ENCODE measurements at regions of chr11 and their contacts with region 1.

Region 1: DNA sequence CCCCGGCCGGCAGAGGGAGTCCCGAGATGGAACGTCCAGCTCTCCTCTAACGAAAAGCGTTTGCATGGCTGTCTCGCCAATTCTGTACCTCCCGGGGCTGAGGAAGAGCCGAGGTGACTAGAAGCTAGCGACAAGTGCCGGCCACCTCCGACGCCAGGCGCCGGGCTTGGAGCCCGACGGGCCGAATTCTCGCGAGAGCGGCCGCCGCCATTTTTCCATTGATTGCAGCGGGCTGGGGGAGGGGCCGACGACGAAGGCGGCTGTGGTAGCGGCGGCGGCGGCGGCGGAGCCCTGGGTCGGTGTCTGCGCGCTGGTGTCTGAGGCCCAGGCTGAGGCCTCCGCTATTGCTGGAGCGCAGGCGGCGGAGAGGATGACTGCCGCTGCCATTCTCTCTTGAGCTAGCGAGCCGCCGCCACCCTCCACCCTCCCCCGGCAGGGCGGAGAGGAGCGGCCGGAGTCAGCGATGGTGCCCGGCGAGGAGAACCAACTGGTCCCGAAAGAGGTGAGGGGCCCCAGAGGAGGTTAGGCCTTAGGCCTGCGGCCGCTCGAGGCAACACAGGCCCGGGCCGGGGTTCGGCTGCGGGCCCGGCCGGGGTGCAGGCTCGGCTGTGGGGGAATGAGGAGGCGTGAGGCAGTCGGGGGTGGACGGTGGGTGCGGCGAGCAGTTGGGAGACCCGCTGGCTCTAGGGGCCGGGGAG is at the start of gene USP47:
- DNase-seq: no peak
- ATAC-seq: peak; percentile 78
- H3K4me3 ChIP-seq: peak within 1 kb of the TSS; percentile 77
- H3K27ac ChIP-seq: peak within 1 kb of the TSS; percentile 96
- H3K4me1 ChIP-seq: peaks cover 2% of the 10 kb centered on the region; the same call in 1 of the 2 replicates
- H3K27me3 ChIP-seq: no peaks in the 10 kb centered on the region
- CTCF ChIP-seq: peak in 2 of 3 experiments; percentile 27 to 50; a peak in 3 of 6 replicates
- EP300 ChIP-seq: no peak
- POLR2A ChIP-seq: peak; percentile 94
- RAD21 ChIP-seq: peak; percentile 26; the same call in 1 of the 2 replicates
- polyA plus RNA-seq, gene USP47: 13.9 to 14.8 TPM

Region 2: GRCh38 chr11:10808553-10809372 is 1033.1 kb before region 1 on chr11 and contains the start of gene EIF4G2:
- CTCF ChIA-PET with region 1: interaction called, 3 read pairs
- POLR2A ChIA-PET with region 1: interaction called, 6 read pairs
- RAD21 ChIA-PET with region 1: interaction called, 10 read pairs
- SMC1A ChIA-PET with region 1: no interaction called
- in situ Hi-C with region 1: no loop called
- intact Hi-C with region 1: loop called (anchors 5 kb)
- DNase-seq: peak; percentile 95
- ATAC-seq: peak; percentile 96
- H3K4me3 ChIP-seq: peak within 1 kb of the TSS; percentile 88
- H3K27ac ChIP-seq: peak within 1 kb of the TSS; percentile 98
- H3K4me1 ChIP-seq: peaks cover 10% of the 10 kb centered on the region; the same call in 1 of the 2 replicates
- H3K27me3 ChIP-seq: no peaks in the 10 kb centered on the region
- CTCF ChIP-seq: no peak
- EP300 ChIP-seq: no peak
- POLR2A ChIP-seq: peak; percentile 98
- RAD21 ChIP-seq: no peak
- polyA plus RNA-seq, gene EIF4G2: 210 to 317 TPM

Region 3: DNA sequence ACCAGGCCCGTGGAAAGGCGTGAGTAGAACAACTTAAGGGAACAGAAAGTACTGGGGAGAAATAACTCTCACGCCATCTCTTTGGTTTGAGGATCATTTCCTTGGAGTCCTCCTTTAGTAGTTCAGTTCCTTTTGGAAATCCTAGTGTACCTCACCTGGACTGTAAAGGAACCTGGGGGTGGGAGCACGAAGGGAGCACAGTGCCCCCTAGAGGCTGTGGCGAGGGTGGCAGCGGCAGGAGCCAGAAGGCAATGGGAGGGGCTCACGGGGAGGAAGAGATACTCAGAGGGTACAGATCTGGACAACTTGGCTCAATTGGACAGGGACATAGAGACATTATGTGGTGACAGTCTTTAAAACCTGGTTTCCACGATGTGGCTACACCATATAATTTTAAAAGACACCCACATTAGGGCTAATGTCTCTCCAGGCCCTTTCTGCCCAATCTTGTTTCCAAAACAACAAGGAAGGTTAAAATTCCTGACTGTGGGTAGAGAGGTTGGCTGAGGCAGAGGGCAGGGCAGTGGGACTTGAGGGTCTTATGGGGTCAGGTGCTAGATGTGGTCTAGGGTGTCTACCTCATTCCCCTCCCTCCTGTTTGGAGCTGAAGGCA is 575.8 kb before region 1 on chr11:
- CTCF ChIA-PET with region 1: no interaction called
- POLR2A ChIA-PET with region 1: interaction called, 11 read pairs
- RAD21 ChIA-PET with region 1: no interaction called
- SMC1A ChIA-PET with region 1: no interaction called
- in situ Hi-C with region 1: no loop called
- intact Hi-C with region 1: no loop called
- DNase-seq: no peak
- ATAC-seq: peak; percentile 91
- H3K4me3 ChIP-seq: no peak overlapping the region
- H3K27ac ChIP-seq: no peak overlapping the region
- H3K4me1 ChIP-seq: peaks cover 17% of the 10 kb centered on the region
- H3K27me3 ChIP-seq: no peaks in the 10 kb centered on the region; a peak in 1 of 4 replicates
- CTCF ChIP-seq: peak; percentile 83 to 97 (median 92)
- EP300 ChIP-seq: no peak
- POLR2A ChIP-seq: no peak
- RAD21 ChIP-seq: peak; percentile 78

Region 4: DNA sequence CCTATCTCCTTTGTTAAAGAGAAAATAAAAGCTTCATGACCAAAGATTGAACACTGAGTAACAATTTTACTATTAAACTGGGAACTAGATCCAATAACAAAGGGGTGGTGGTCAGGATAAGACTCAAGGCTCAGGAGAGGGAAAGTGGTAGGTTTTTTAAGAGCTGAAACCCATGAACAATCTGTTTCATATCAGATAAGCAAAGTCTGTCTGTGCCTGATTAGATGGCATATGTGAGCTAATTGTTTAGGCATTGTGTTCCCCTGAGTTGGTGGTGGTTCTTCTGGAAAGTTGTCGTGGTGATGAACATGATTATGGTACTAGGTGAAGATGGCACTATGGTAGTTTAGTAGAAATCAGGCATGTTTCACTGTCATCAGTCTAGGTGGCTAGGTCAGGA is 24.3 kb after region 1 on chr11:
- CTCF ChIA-PET with region 1: interaction called, 211 read pairs
- POLR2A ChIA-PET with region 1: interaction called, 11 read pairs
- RAD21 ChIA-PET with region 1: interaction called, 5 read pairs
- SMC1A ChIA-PET with region 1: interaction called, 22 read pairs
- in situ Hi-C with region 1: no loop called
- intact Hi-C with region 1: no loop called
- DNase-seq: no peak
- ATAC-seq: peak; percentile 25
- H3K4me3 ChIP-seq: no peak overlapping the region
- H3K27ac ChIP-seq: peak overlapping the region; percentile 11; the same call in 1 of the 2 replicates
- H3K4me1 ChIP-seq: peaks cover 9% of the 10 kb centered on the region
- H3K27me3 ChIP-seq: no peaks in the 10 kb centered on the region
- CTCF ChIP-seq: no peak
- EP300 ChIP-seq: no peak
- POLR2A ChIP-seq: no peak
- RAD21 ChIP-seq: no peak

Region 5: GRCh38 chr11:11882539-11882938 is 40.7 kb after region 1 on chr11:
- CTCF ChIA-PET with region 1: interaction called, 13 read pairs
- POLR2A ChIA-PET with region 1: interaction called, 6 read pairs
- RAD21 ChIA-PET with region 1: interaction called, 3 read pairs
- SMC1A ChIA-PET with region 1: interaction called, 8 read pairs
- in situ Hi-C with region 1: no loop called
- intact Hi-C with region 1: no loop called
- DNase-seq: no peak
- ATAC-seq: no peak
- H3K4me3 ChIP-seq: no peak overlapping the region
- H3K27ac ChIP-seq: no peak overlapping the region
- H3K4me1 ChIP-seq: peaks cover 11% of the 10 kb centered on the region; the same call in 1 of the 2 replicates
- H3K27me3 ChIP-seq: no peaks in the 10 kb centered on the region
- CTCF ChIP-seq: no peak
- EP300 ChIP-seq: no peak
- POLR2A ChIP-seq: no peak
- RAD21 ChIP-seq: no peak

Measured in GM12878 (cell line).